ENCODE measurements at regions of chr16 and their contacts with region 1.

Region 1: DNA sequence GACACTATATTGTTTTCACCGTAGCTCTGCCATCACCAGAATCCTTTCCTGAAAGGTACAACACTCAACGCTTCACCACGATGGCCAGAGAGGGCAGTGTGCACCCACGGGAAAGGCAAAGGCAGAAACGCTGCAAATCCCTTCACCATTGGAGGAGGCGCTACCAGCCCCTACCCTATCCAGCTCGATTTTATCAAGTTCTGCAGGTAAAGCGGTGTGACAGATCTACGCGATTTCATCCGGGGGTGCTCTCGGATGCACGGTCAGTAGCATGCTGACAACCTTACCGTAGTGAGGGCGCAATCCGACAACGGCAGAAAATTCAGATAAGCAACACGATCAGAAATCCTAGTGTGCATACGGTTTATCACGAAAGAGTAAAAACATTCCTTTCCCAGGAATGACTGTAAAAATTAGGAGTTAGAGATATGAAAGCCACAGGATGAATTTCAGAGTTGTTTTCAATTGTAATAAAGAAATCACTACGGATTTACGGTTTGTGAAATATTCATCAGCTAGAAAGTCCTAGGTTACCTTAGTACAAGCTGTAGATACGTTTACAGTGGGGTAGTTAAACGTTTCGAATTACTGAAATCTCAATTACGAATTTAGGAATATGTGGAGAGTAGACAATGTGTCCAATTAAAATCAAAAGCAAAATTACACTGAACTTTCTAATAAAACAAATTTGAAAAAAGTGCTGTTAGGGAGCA is 1.8 kb downstream of the NETO2 start:
- DNase-seq: peak; percentile 91
- ATAC-seq: peak; percentile 79
- H3K4me3 Mint-ChIP-seq: peak overlapping the region; percentile 75
- H3K27ac Mint-ChIP-seq: peak overlapping the region; percentile 58
- H3K4me1 Mint-ChIP-seq: peaks cover 35% of the 10 kb centered on the region
- H3K27me3 Mint-ChIP-seq: peaks cover 21% of the 10 kb centered on the region

Region 2: DNA sequence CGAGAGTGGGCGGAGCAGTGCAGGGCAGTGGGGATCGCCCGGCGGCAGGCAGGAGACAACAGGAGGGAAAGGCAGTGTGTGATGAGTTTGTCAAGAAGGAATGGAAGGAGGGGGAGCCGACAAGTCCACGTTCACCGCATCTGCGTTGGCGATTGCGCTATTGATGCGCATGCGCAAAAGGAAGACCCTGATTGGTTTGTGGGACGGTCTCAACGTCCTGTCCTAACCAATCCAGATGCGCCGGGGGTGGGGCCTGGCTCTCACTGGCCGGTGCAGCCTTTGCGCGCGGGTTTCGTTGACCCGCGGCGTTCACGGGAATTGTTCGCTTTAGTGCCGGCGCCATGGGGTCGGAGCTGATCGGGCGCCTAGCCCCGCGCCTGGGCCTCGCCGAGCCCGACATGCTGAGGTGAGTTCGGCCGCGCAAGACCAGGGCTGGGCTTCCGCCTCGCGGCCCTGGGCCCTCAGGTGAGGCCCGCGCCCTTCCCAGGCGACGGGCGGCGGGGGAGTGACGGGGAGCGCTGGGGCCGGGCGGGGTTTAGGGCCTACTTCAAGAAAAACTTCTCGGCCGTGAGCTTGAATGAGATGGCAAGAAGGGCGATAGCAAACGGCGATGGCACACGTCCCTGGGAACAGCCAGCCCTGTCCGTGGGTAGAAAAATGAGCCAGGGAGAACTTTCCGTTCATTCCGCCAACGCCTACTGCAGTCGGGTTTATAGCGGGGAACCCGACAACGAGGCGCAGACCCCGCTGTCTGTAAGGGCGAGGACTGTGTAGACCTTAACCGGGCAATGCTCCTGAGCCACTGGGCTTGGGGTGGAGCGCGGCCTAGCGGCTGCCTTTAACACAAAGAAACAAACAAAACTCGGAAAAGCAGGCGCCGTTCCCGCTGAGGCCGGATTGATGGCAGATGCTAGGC is 452.3 kb before region 1 on chr16 and contains the start of gene ORC6:
- CTCF ChIA-PET with region 1: no interaction called
- POLR2A ChIA-PET with region 1: no interaction called
- intact Hi-C with region 1: loop called in 1 of 2 experiments (anchors 1 kb)
- DNase-seq: peak; percentile 99
- ATAC-seq: peak; percentile 83
- H3K4me3 Mint-ChIP-seq: no peak within 1 kb of the TSS
- H3K27ac Mint-ChIP-seq: no peak within 1 kb of the TSS
- H3K4me1 Mint-ChIP-seq: peaks cover 43% of the 10 kb centered on the region
- H3K27me3 Mint-ChIP-seq: no peaks in the 10 kb centered on the region
- total RNA-seq, gene ORC6: 30.3 to 43.4 TPM

Region 3: DNA sequence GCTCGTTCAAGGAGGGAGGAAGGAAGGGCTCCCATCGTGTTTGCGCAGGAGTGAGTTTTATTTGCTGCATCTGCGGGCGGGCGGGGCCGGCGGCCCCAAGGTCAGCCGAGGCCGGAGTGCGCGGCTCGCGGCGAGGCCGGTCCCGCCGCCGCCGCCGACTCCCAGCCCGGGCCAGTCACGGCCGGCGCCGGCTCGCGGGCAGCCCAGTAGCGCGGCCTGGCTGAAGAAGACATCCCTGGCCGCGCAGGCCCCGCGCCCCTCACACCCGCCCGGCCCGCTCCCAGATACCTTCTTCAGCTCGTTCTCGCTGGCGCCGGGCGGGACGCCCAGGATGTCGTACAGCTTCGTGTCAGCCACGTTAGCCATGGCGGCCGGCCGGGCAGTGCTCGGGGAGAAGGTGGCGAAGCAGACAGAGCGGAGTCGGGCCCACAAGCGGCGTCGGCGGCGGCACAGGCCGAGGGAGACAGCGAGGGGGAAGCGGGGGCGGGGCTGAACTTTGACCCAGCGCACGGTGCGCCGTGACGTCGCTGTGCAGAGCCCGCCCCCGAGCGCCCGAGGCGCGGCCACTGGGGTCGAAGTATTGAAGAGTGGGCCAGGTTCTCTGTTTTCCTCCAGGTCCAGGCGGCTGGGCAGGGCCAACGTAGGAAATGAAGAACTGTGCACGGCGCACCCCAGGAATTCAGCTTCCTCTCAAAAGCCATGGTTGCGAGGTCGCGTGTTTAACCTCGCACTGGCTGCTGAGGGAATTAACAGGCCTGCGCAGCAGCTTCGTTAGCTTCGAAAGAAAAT is 168.5 kb before region 1 on chr16 and contains the start of gene DNAJA2:
- CTCF ChIA-PET with region 1: interaction called, 7 read pairs
- POLR2A ChIA-PET with region 1: interaction called, 3 read pairs
- intact Hi-C with region 1: loop called (anchors 1 to 2 kb)
- DNase-seq: peak; percentile 96
- ATAC-seq: peak; percentile 87
- H3K4me3 Mint-ChIP-seq: peak within 1 kb of the TSS; percentile 85
- H3K27ac Mint-ChIP-seq: peak within 1 kb of the TSS; percentile 99
- H3K4me1 Mint-ChIP-seq: peaks cover 56% of the 10 kb centered on the region
- H3K27me3 Mint-ChIP-seq: no peaks in the 10 kb centered on the region
- total RNA-seq, gene DNAJA2: 57.2 to 71.2 TPM

Region 4: DNA sequence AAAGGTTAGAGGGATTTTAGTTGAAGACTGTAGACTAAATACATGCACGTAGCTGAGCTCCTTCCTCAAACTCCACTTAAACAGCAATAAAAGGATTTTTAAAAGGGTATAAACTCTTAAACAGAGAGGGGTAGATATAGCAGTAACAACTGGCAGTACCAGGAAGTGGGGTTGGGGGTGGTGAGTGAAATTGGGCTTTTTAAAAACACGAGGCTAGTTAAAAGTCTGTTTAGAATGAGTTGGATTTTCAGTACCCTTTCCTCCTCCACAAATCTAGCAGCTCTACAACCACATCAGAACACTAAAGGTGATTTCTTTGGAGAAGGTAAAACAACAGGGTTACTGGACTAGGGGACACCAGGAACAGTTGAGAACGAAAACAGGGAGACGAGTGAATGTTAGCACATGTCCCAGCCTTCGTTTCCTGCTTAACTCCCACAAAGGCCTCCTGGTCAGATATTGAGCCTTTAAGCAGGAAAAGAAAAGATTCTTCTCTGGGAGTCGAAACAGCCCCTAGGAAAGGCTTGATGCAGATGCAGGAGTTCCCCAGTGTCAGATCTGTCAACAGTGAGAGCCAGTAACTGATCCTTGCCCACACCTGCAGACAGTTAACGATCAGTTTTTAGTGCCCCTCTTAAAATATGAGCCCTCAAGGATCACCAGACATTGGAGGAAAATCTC is 12.0 kb before region 1 on chr16:
- CTCF ChIA-PET with region 1: interaction called, 24 read pairs
- POLR2A ChIA-PET with region 1: no interaction called
- intact Hi-C with region 1: no loop called
- DNase-seq: no peak
- ATAC-seq: peak; percentile 39
- H3K4me3 Mint-ChIP-seq: no peak overlapping the region
- H3K27ac Mint-ChIP-seq: peak overlapping the region; percentile 22
- H3K4me1 Mint-ChIP-seq: peaks cover 11% of the 10 kb centered on the region
- H3K27me3 Mint-ChIP-seq: no peaks in the 10 kb centered on the region

Region 5: DNA sequence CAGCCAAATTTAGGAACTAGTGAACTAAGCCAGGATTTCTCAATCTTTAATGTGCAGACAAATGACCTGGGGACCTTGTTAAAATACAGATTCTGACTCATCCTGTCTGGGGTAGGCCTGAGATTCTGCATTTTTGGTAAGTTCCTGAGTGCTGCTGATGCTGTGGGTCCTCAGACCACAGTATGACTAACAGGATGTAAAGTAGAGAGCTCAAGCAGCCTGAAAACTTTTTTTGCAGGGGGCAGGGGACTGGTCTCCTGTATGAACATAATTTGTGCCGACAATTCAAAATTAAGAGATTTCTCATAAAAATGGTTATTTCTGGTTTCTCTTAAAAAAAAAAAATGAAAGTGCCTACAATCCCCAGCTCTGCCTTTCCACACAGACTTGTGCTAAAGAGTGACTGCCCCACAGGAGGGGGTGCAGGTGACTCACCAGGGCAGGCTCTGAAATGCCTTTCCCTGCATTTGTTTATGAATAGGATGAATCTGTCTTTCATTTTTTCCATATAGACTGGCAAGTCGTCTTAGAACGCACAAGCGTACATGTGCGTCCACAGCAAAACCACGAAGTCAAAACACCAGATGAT is 590.7 kb after region 1 on chr16:
- CTCF ChIA-PET with region 1: interaction called, 3 read pairs
- POLR2A ChIA-PET with region 1: interaction called, 8 read pairs
- intact Hi-C with region 1: loop called in 1 of 2 experiments (anchors 10 kb)
- DNase-seq: peak; percentile 51
- ATAC-seq: peak; percentile 91
- H3K4me3 Mint-ChIP-seq: no peak overlapping the region
- H3K27ac Mint-ChIP-seq: peak overlapping the region; percentile 56
- H3K4me1 Mint-ChIP-seq: peaks cover 6% of the 10 kb centered on the region
- H3K27me3 Mint-ChIP-seq: peaks cover 2% of the 10 kb centered on the region

Region 6: DNA sequence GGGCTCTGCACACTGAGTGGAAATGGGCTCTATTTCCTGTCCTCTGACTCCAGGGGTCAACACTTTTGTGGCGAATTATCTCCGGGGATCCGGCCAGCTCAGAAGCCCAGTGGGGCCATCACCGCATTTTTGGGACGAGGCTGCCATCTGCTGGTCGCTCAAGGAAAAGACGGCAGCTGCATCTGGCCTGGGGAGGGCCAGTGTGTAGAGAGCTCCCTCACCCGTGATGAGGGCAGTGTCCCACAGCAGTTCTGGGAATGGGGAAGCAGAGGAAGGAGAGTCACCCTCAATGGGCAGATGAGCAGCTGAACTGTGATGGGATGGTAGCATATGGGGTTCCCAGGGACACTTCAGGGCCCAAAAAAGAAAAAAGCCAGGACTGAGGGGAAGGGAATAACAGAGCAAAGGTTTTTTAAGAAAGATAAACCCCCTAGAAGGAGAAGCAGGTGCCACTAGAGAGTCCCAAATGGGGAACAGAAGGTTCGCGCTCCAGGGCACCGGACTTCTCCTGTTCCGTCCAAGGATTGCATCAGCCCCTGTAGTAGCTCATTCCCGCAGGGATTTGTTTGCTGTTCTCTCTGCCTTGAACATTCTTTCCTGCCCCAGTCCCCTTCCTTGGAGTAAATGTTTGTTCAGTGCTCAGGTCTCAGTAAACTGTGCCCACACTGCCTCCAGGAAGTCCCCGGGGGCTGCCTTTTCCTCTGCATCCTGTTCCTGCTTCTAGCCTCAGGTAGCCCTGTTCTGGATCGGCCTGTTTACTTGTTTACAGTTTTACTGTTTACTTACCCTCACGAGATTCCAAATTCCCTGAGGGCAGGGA is 1023.2 kb after region 1 on chr16:
- CTCF ChIA-PET with region 1: interaction called, 14 read pairs
- POLR2A ChIA-PET with region 1: no interaction called
- intact Hi-C with region 1: loop called in 1 of 2 experiments (anchors 2 kb)
- DNase-seq: peak; percentile 82
- ATAC-seq: peak; percentile 92
- H3K4me3 Mint-ChIP-seq: no peak overlapping the region
- H3K27ac Mint-ChIP-seq: no peak overlapping the region
- H3K4me1 Mint-ChIP-seq: peaks cover 4% of the 10 kb centered on the region
- H3K27me3 Mint-ChIP-seq: peaks cover 17% of the 10 kb centered on the region

Measured in activated CD4-positive, alpha-beta T cell treated with anti-CD3 and anti-CD28 coated beads for 36 hours (primary cell).